ENCODE measurements at regions of chr2 and their contacts with region 1.

Region 1: GRCh38 chr2:231604685-231605606 is 12.3 kb downstream of the TEX44 start:
- DNase-seq: peak; percentile 99 to 100
- ATAC-seq: peak; percentile 93 to 95 (median 94)
- H3K4me3 ChIP-seq: peak overlapping the region in 9 of 10 donors; percentile 40 to 69 (median 57)
- H3K27ac ChIP-seq: peak overlapping the region; percentile 95 to 100 (median 98)
- H3K4me1 ChIP-seq: peaks cover 18 to 61% (median 34%) of the 10 kb centered on the region in 9 donors
- H3K27me3 ChIP-seq: no peaks in the 10 kb centered on the region
- CTCF ChIP-seq: peak in 5 of 9 donors; percentile 6 to 43 (median 34)

Region 2: GRCh38 chr2:231514103-231514950 is 90.6 kb before region 1 on chr2:
- intact Hi-C with region 1: loop called in 7 of 10 experiments (anchors 2 to 10 kb)
- DNase-seq: peak; percentile 98
- ATAC-seq: peak; percentile 99 to 100 (median 100)
- H3K4me3 ChIP-seq: peak overlapping the region; percentile 63 to 89 (median 78)
- H3K27ac ChIP-seq: peak overlapping the region; percentile 51 to 90 (median 87)
- H3K4me1 ChIP-seq: peaks cover 0 to 23% (median 12%) of the 10 kb centered on the region in 9 donors
- H3K27me3 ChIP-seq: no peaks in the 10 kb centered on the region
- CTCF ChIP-seq: no peak

Region 3: GRCh38 chr2:231522799-231523180 is 82.2 kb before region 1 on chr2:
- intact Hi-C with region 1: loop called in 6 of 10 experiments (anchors 5 to 10 kb)
- DNase-seq: no peak
- ATAC-seq: no peak
- H3K4me3 ChIP-seq: no peak overlapping the region
- H3K27ac ChIP-seq: no peak overlapping the region
- H3K4me1 ChIP-seq: peaks cover 0 to 16% (median 0%) of the 10 kb centered on the region in 9 donors
- H3K27me3 ChIP-seq: peaks cover 0 to 15% (median 0%) of the 10 kb centered on the region in 7 donors
- CTCF ChIP-seq: no peak

Region 4: GRCh38 chr2:231563378-231563961 is 41.5 kb before region 1 on chr2:
- intact Hi-C with region 1: loop called in 9 of 10 experiments (anchors 1 to 5 kb)
- DNase-seq: peak; percentile 34 to 46
- ATAC-seq: peak; percentile 59 to 93 (median 76)
- H3K4me3 ChIP-seq: no peak overlapping the region
- H3K27ac ChIP-seq: no peak overlapping the region
- H3K4me1 ChIP-seq: no peaks in the 10 kb centered on the region
- H3K27me3 ChIP-seq: no peaks in the 10 kb centered on the region
- CTCF ChIP-seq: peak; percentile 36 to 79 (median 73)

Region 5: GRCh38 chr2:231666171-231667095 is 61.5 kb after region 1 on chr2:
- intact Hi-C with region 1: no loop called
- DNase-seq: peak; percentile 95 to 96
- ATAC-seq: peak; percentile 82 to 93 (median 91)
- H3K4me3 ChIP-seq: peak overlapping the region; percentile 39 to 60 (median 51)
- H3K27ac ChIP-seq: peak overlapping the region; percentile 96 to 100 (median 99)
- H3K4me1 ChIP-seq: peaks cover 23 to 62% (median 48%) of the 10 kb centered on the region in 9 donors
- H3K27me3 ChIP-seq: no peaks in the 10 kb centered on the region
- CTCF ChIP-seq: no peak

Region 6: DNA sequence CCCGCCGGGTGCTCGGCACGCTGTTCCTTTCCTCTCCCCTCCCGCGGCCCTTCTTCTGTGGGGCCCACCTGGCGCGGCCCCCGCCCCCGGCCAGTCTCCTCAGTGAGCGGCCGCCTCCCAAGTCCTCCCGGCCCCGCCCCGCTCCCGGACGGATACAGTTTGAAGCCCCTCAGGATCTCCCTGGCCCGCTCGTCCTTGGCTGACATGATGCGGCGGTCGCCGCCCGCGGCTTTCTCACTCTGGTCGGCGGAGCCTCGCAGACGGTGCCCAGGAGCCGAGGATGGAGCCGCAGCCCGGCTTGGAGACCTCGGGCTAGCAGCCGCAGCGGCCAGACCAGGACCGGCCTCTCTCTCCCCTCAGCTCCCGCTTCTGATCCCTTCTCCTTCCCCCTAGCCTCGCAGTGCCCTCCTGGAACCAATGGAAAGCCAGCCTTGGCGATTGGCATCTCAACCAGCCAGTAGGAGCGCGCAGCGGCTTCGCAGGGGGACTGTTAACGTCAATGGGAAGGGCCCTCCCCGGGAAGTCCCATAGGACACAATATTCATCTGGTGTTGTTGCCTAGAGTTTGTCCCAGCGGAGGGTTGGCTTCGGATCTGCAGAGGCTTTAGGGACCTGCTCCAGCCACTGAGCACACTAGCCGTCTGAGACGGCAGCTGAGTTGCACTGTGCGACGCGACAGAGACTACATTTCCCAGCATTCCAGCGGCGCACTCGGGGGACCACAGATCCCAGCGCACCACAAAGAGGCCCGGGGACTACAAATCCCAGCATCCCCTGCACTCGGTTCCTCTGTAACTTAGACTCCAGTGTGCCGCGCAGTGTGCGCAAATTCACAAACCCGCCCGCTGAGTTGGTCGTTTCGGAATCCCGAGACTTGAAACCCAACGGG is 176.2 kb after region 1 on chr2 and contains the start of gene PDE6D:
- intact Hi-C with region 1: loop called in 4 of 10 experiments (anchors 10 kb)
- DNase-seq: peak; percentile 99 to 100
- ATAC-seq: peak; percentile 95 to 98 (median 96)
- H3K4me3 ChIP-seq: peak within 1 kb of the TSS; percentile 77 to 98 (median 90)
- H3K27ac ChIP-seq: peak within 1 kb of the TSS; percentile 43 to 95 (median 88)
- H3K4me1 ChIP-seq: peaks cover 2 to 49% (median 43%) of the 10 kb centered on the region in 9 donors
- H3K27me3 ChIP-seq: no peaks in the 10 kb centered on the region
- CTCF ChIP-seq: no peak
- total RNA-seq, gene PDE6D: 11.4 to 23.3 (median 18.4) TPM

Measured in heart right ventricle (tissue), 16 donors.